ENCODE measurements at regions of chr3 and their contacts with region 1.

Region 1: GRCh38 chr3:157088601-157089454 is 71.1 kb downstream of the CCNL1 start:
- DNase-seq: peak; percentile 95
- H3K4me3 ChIP-seq: peak overlapping the region; percentile 72
- H3K27ac ChIP-seq: peak overlapping the region; percentile 77
- H3K4me1 ChIP-seq: peaks cover 24% of the 10 kb centered on the region
- CTCF ChIP-seq: peak; percentile 43; the same call in 1 of the 2 replicates

Region 2: GRCh38 chr3:156674046-156674910 is 414.6 kb before region 1 on chr3 and contains the start of gene TIPARP:
- CTCF ChIA-PET with region 1: interaction called, 3 read pairs
- POLR2A ChIA-PET with region 1: interaction called, 19 read pairs
- intact Hi-C with region 1: loop called (anchors 2 kb)
- DNase-seq: peak; percentile 97
- H3K4me3 ChIP-seq: peak within 1 kb of the TSS; percentile 96
- H3K27ac ChIP-seq: peak within 1 kb of the TSS; percentile 77
- H3K4me1 ChIP-seq: peaks cover 39% of the 10 kb centered on the region
- CTCF ChIP-seq: peak; percentile 79
- total RNA-seq, gene TIPARP: 9.7 and 10.0 TPM in 2 replicates

Region 3: DNA sequence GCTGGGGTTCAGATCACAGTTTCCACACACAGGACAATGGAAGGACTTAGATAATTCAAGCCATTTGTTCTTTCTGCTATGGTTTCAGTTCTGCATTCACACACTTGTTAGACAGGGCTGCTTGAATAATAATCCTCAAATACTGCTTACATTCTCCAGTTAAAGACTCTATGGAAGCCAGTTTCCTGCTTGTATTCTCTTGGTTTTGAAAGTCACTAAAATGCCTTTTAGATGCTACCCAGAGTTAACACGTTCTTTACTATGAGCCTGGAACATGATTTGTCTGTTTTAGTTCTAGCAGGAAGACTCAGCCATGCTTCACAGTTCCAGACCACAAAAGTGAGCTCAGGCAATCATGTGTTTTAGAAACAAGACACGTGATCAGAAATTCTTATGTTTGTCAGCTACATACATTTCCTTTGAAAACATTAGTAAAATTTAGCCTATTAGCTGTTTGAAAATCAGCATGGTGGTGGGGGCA is 110.3 kb before region 1 on chr3:
- CTCF ChIA-PET with region 1: no interaction called
- POLR2A ChIA-PET with region 1: interaction called, 10 read pairs
- intact Hi-C with region 1: loop called (anchors 5 kb)
- DNase-seq: peak; percentile 85
- H3K4me3 ChIP-seq: peak overlapping the region; percentile 30
- H3K27ac ChIP-seq: peak overlapping the region; percentile 60
- H3K4me1 ChIP-seq: peaks cover 21% of the 10 kb centered on the region
- CTCF ChIP-seq: no peak

Region 4: DNA sequence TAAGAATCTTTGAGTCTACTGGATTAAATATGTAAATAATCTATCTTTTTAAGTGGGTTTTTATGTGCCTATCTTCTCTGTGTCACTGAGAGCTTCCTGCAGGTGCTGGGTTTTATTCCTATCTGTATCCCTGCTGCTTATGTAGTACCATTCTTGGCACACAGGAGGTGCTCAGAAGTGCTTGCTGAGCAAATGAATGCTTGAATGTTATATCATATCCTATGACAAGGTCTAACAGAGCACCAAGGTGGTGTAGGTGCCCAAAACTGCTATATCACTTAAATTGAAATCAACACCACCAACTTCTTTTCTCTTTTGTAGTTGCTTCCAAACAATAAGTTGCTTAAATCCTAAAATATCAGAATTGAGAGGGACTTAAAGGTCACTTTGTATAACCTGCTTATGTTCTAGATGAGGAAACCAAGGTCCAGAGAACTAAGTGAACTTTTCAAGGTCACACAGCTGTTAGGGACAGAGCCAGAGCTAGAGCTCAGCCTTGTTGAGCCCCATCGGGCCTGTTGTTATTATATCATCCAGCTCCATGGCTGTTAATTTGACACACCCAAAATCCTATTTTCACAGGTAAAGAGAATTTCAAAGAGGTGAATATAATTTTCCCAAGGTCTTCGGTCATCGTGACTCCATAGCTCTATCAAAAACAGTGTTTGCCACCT is 25.1 kb after region 1 on chr3:
- CTCF ChIA-PET with region 1: interaction called, 5 read pairs
- POLR2A ChIA-PET with region 1: interaction called, 171 read pairs
- intact Hi-C with region 1: no loop called
- DNase-seq: peak; percentile 29
- H3K4me3 ChIP-seq: no peak overlapping the region
- H3K27ac ChIP-seq: no peak overlapping the region
- H3K4me1 ChIP-seq: no peaks in the 10 kb centered on the region
- CTCF ChIP-seq: peak; percentile 47

Region 5: DNA sequence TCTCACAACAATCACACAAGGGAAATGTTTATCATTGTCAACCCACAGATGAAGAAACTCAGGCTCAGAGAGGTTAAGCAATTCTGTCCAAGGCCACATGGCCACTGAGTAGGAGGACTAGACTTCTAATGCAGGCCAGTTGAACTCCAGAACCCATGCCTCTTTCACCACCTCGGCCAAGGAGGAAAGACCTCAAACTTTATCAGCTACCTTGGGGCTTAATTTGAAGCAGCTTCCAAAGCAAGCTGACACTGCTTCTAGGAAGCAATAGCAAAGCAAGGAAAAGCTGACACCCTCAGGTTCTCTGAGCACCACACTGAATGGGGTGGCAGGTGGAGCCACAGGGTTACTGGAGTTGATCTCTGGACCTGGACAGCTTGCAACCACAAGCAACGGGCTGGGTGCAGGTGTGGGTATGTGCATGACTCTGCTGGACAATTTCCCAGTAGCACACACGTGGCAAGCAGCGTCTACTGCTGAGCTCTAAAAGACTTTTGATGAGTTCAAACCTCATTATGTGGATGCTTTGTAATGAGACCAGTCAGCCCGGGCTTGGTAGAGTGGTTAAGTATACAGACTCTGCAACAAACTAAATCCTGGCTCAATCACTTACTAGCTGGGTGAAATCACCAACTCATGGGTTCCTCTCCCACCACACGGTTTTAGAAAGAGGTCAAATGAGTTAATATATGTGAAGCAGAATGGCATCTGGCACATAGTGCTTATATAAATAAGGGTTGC is 48.0 kb after region 1 on chr3:
- CTCF ChIA-PET with region 1: interaction called, 8 read pairs
- POLR2A ChIA-PET with region 1: interaction called, 23 read pairs
- intact Hi-C with region 1: no loop called
- DNase-seq: no peak
- H3K4me3 ChIP-seq: no peak overlapping the region
- H3K27ac ChIP-seq: no peak overlapping the region
- H3K4me1 ChIP-seq: peaks cover 11% of the 10 kb centered on the region
- CTCF ChIP-seq: no peak